Uterus (tissue), 4 donors: ENCODE measurements at regions of chr1 and their contacts with region 1.

Region 1: DNA sequence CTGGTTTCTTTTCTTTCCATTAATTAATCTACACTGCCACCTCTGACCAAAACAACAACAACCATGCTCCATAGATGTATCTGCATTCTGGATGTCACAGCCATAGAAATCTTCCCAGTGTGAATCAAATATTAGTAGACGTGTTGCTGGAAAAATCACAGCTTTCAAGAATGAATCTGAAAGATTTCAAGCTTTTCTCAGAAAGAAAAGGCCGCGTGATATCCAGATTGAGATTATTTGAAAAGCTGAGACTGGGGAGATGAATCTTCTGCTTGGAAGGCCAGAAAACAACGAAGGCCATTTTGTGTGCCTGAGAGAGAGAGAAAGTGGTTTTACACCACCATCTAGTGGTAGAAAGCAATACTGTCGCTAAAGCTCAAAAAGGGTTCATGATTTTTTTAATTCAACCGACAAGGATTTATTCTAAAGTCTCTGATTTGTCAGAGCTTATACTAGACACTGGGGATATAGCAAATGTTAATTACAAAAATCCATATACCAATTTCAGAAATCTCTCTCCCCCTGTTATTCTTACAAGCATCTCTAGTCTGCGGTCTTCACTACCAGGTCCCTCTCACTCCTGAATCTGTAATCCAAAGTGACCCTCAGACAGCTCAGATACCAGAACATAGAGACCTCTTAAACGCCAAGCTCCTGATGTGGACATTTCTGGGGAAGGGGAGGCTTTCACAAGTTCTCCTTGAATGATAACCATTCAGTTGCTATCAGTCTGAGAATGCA is 87.5 kb upstream of the SGIP1 start:
- DNase-seq: peak in 1 of 2 donors; percentile 23
- H3K4me3 ChIP-seq: no peak overlapping the region
- H3K27ac ChIP-seq: no peak overlapping the region
- H3K4me1 ChIP-seq: no peaks in the 10 kb centered on the region
- H3K27me3 ChIP-seq: no peaks in the 10 kb centered on the region
- CTCF ChIP-seq: peak; percentile 88 to 93 (median 91)
- POLR2A ChIP-seq: no peak

Region 2: DNA sequence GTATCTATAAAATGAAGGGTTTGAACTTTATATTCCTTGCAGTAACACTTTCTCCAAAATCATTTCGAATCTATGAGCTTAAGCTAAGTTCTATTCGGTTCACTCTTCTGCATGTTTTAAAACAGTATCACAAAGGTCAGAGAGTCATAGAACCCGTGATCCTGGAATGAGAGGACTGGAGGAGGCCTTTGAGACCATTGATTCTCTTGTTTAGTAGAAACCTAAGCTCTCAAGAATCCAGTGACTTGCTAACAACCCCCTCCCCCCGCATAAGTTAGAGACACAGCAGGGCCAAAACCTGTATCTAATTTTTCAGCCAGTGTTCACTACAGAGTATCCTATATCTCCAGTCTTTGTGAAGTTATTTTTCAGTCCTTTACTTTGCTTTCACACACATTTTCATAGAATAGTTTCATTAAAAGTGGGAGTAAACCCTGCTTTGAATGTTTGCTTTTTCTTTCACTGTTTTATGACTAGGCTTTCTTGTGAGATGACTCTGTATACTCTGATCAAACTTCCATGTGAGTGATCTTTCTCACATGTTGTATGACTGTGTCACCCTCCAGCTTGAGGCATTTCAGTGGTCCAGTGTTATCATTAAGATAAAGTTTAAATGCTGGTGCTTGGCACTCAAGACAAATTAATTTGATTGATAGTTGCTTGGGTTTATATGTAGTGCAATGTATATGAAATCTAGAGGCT is 187.9 kb before region 1 on chr1:
- intact Hi-C with region 1: loop called (anchors 5 kb)
- DNase-seq: no peak
- H3K4me3 ChIP-seq: no peak overlapping the region
- H3K27ac ChIP-seq: no peak overlapping the region
- H3K4me1 ChIP-seq: no peaks in the 10 kb centered on the region
- H3K27me3 ChIP-seq: no peaks in the 10 kb centered on the region
- CTCF ChIP-seq: no peak
- POLR2A ChIP-seq: no peak

Region 3: DNA sequence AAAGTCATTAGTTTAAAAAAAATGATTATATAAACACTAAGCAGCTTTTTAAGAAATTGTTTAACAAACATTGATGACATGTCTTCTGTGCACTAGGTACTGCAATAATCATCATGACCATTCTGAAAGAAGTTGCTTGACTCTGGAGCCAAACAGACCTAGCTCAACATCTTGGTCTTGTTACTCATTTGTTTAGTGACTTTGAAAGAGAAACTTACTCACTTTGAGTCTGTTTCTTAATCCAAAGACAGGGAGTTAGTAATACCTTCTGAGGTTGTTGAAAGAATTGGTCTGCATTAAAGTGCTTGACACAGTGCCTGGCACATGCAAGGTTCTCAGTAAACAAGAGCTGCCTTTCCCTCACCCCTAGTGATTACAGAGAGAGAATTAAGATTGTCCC is 172.0 kb after region 1 on chr1:
- intact Hi-C with region 1: no loop called
- DNase-seq: no peak
- H3K4me3 ChIP-seq: no peak overlapping the region
- H3K27ac ChIP-seq: no peak overlapping the region
- H3K4me1 ChIP-seq: no peaks in the 10 kb centered on the region
- H3K27me3 ChIP-seq: no peaks in the 10 kb centered on the region
- CTCF ChIP-seq: no peak
- POLR2A ChIP-seq: no peak